ENCODE measurements at regions of chr12 and their contacts with region 1.

Region 1: DNA sequence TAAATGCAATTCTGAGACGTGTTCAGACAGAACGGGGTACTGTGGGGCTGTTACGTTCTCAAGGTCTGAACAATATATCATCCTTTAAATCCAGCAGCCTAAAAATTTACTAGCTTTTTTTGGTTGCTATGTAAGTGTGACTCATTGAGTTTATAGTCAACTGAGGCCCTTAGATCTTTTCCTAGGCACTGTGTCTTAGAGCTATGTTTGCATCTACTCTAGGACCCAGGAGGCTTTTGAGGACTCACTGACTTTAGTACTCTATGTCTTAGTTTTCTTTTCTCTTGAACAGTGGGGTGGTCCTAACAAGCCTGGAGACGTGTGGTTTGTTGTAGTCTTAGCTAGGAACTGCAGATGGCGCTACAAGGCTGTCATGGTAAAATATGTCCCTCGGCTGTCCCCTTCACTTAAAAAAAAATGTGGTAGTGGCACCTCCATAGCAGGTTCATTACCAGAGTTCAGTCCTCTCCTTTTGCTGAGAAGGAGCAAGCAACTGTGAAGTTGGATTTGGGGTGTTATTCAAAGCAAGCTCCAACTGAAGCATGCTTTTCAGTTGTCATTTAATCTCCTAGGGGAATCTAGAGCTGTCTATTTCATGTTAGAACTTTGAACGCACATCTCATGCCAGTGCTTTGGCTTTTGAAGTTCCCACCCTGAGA is 8.7 kb upstream of the SPATS2 start:
- DNase-seq: peak; percentile 75
- H3K4me3 Mint-ChIP-seq: no peak overlapping the region
- H3K27ac Mint-ChIP-seq: no peak overlapping the region
- H3K4me1 Mint-ChIP-seq: peaks cover 2% of the 10 kb centered on the region
- H3K27me3 Mint-ChIP-seq: peaks cover 48% of the 10 kb centered on the region

Region 2: DNA sequence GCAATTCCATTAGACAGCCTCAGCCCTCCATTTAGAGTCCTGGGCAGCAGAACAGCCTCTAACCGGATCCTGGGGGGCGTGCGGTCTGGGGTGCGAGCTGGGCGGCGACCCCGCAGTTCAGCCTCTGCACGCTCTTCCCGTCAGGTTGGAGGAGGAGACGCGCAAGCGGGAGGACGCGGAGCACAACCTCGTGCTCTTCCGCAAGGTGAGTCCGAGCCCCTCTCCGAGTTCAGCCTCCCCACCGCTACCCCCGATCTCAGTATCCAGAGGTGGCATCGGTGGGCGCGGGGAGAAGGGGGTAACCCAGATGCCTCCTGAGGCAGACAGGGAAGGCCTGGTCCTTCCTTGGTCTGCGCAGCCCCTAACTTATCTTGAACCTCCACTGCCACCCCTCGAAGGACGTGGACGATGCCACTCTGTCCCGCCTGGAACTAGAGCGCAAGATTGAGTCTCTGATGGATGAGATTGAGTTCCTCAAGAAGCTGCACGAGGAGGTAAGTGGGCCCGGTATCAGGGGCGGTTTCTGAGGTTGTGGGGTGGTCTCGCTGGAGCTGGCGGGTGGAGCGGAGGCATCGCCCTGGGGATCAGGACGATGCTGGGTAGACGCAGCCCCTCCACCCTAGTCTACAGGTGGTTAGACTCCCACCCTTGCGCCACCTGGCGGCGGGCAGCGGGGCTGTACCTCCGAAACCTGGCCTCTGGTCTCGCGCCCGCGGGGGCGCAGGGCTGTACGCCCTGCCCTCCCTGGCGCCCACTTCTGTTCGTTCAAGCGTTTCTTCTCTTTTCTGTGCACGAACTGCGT is 62.4 kb before region 1 on chr12:
- CTCF ChIA-PET with region 1: interaction called, 17 read pairs
- DNase-seq: peak; percentile 76
- H3K4me3 Mint-ChIP-seq: peak overlapping the region; percentile 37
- H3K27ac Mint-ChIP-seq: no peak overlapping the region
- H3K4me1 Mint-ChIP-seq: peaks cover 25% of the 10 kb centered on the region
- H3K27me3 Mint-ChIP-seq: peaks cover 96% of the 10 kb centered on the region

Region 3: GRCh38 chr12:49347384-49348237 is 11.0 kb before region 1 on chr12:
- CTCF ChIA-PET with region 1: interaction called, 63 read pairs
- DNase-seq: peak; percentile 83
- H3K4me3 Mint-ChIP-seq: peak overlapping the region; percentile 38
- H3K27ac Mint-ChIP-seq: no peak overlapping the region
- H3K4me1 Mint-ChIP-seq: peaks cover 41% of the 10 kb centered on the region
- H3K27me3 Mint-ChIP-seq: peaks cover 93% of the 10 kb centered on the region

Region 4: GRCh38 chr12:49527361-49528130 is 168.9 kb after region 1 on chr12:
- CTCF ChIA-PET with region 1: interaction called, 10 read pairs
- DNase-seq: no peak
- H3K4me3 Mint-ChIP-seq: no peak overlapping the region
- H3K27ac Mint-ChIP-seq: no peak overlapping the region
- H3K4me1 Mint-ChIP-seq: no peaks in the 10 kb centered on the region
- H3K27me3 Mint-ChIP-seq: peaks cover 5% of the 10 kb centered on the region

Region 5: DNA sequence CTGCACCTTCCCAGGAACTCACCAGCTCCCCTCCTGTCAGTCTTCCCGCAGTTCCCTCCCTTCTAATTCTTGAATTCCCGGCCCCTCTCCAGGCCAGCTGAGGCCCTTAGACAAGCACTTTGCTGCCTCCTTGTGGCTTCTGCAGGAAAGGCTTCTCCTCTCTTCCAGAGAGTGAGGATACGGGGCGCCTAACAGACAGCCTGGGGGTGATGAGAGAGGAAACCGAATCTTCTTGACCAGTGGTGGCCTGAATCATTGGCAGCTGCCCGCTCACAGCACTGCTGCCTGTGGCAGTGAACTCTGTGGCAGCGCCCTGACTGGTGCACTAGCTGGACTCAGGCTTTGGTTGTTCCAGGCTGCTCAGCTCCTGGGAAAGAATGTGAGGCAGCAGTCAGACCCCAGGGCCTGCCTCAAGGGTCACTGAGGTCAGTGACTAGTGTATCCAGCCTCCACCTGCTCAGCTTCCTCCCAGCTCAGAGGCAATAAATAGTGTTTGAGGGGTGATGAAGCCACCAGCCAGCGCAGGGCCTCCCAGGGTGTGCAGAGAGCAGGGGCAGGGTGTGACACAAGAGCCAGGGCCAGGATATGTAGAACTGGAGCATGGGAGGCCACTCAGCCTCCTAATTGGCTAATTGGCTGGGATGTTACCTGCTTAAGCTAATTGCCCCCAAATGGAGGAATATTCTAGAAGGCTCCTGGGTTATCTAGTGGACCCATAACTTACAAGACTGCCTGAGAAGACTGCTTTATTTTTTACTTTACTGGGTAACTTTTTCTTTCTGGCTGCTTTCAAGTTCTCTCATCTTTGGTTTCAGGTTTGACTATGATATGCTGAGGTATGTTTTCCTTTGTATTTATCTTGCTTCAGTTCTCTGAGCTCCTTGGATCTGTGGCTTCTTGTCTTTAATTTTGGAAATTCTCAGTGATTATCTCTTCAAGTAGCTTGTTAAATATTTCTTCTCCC is 222.2 kb after region 1 on chr12:
- CTCF ChIA-PET with region 1: interaction called, 57 read pairs
- DNase-seq: peak; percentile 78
- H3K4me3 Mint-ChIP-seq: no peak overlapping the region
- H3K27ac Mint-ChIP-seq: no peak overlapping the region
- H3K4me1 Mint-ChIP-seq: peaks cover 15% of the 10 kb centered on the region
- H3K27me3 Mint-ChIP-seq: no peaks in the 10 kb centered on the region